ENCODE measurements at regions of chr10 and their contacts with region 1.

Region 1: GRCh38 chr10:97765201-97765600 is 6.6 kb downstream of the SFRP5 start:
- DNase-seq: no peak
- ATAC-seq: peak; percentile 48 to 92 (median 66)
- H3K4me3 ChIP-seq: no peak overlapping the region
- H3K27ac ChIP-seq: no peak overlapping the region
- H3K4me1 ChIP-seq: no peaks in the 10 kb centered on the region
- H3K27me3 ChIP-seq: peaks cover 0 to 25% (median 3%) of the 10 kb centered on the region in 3 donors
- CTCF ChIP-seq: no peak

Region 2: DNA sequence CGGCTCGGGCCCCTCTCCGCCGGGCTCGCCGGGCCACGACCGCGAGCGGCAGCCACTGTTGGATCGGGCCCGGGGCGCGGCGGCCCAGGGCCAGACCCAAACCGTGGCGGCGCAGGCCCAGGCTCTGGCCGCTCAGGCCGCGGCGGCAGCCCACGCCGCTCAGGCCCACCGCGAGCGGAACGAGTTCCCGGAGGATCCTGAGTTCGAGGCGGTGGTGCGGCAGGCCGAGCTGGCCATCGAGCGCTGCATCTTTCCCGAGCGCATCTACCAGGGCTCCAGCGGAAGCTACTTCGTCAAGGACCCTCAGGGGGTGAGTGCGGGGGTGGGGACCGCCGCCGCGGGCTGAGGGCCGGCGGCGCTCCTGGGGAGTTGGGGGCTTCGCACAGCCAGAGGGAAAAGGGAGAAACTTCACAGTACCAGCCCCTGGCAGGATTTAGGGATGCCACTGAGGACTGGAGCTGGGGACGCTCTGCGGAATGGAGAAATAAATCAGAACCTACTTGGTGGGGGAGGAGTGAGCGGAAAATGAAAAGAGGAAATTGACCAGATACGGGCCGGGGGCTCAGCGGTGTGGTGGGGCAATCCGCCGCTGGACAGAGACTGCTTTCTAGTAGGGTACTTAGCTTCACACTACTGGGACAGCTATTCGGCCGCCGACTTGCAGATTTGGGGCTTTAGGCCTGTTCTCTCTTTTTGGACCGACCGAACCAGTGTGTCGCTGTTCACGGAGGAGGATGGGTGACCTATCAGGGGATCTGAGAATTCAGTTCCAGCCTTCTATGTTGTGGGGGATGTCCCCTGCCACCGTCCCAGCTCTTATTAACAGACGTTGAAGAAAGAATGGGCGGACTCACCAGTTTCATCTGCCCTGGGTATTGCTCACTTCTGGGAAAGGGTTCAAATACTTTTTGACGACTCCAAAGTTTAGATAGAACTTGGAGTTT is 124.1 kb before region 1 on chr10:
- intact Hi-C with region 1: no loop called
- DNase-seq: peak in 1 of 2 donors; percentile 29
- ATAC-seq: peak in 2 of 4 donors; percentile 46 to 48
- H3K4me3 ChIP-seq: peak overlapping the region; percentile 90
- H3K27ac ChIP-seq: peak overlapping the region; percentile 84
- H3K4me1 ChIP-seq: peaks cover 14% of the 10 kb centered on the region
- H3K27me3 ChIP-seq: no peaks in the 10 kb centered on the region
- CTCF ChIP-seq: no peak

Region 3: DNA sequence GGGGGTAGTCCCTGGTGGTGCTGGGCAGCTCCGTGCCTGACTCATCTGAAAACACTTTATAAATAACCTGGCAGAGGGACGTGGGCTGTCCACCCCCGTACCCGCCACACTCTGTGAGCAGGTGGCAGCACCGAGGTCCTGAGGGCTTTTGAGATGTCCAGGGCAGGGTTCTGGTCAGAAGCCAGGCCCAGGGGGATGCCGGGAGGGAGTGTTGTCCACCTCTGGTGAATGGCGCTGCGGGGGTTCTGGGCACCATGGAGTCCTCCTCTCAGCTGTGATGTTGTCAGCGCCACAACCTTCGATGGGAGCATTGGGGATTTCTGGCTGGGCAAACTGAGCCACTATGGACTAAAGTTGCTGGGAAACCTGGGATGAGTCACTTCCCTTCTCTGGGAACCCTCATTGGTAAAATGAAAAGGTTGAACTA is 57.1 kb after region 1 on chr10:
- intact Hi-C with region 1: no loop called
- DNase-seq: peak; percentile 61 to 86
- ATAC-seq: peak; percentile 82 to 88 (median 84)
- H3K4me3 ChIP-seq: peak overlapping the region; percentile 56
- H3K27ac ChIP-seq: peak overlapping the region; percentile 95
- H3K4me1 ChIP-seq: peaks cover 44% of the 10 kb centered on the region
- H3K27me3 ChIP-seq: no peaks in the 10 kb centered on the region
- CTCF ChIP-seq: peak; percentile 5

Region 4: DNA sequence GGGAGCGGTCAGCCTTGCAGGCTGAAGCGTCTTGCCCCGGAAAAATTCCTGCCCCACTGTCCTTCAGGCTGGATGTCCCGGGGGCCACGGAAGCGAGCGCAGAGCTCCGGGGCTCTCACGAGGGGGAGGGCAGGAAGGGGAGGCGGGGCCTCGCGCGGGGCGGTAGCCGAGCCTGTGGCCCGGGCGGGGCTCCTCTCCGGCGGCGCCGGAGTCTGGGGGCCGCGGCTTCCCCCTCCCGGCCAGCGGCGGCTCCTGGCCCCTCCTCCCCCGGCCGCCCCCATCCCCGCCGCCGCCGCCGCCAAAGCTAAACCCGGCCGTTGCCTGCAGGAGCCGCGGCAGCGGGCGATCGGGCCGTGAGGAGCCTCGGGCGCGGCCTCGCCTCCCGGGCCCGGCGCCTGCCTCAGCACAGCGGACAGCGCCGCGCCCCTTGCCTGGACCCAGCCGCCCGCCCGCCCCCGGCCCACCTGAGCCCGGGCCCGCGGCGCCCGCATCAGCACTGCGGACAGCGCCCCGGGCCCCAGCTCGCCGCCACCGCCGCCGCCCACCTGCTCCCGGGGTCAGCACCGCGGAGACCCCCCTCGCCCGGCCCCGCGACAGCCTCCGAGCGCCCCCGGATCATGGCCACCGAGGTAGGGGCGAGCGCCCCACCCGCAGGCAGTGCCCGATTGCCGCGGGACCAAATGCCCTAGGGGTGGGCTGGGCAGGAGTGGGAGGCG is 84.6 kb after region 1 on chr10 and contains the start of gene GOLGA7B:
- intact Hi-C with region 1: loop called in 1 of 2 experiments (anchors 5 kb)
- DNase-seq: peak in 1 of 2 donors; percentile 28
- ATAC-seq: peak; percentile 77 to 83 (median 80)
- H3K4me3 ChIP-seq: peak within 1 kb of the TSS; percentile 69
- H3K27ac ChIP-seq: no peak within 1 kb of the TSS
- H3K4me1 ChIP-seq: peaks cover 8% of the 10 kb centered on the region
- H3K27me3 ChIP-seq: peaks cover 0 to 6% (median 0%) of the 10 kb centered on the region in 3 donors
- CTCF ChIP-seq: no peak
- total RNA-seq, gene GOLGA7B: 0.19 to 4.1 (median 0.99) TPM

Region 5: GRCh38 chr10:98150544-98150943 is 385.3 kb after region 1 on chr10:
- intact Hi-C with region 1: no loop called
- DNase-seq: no peak
- ATAC-seq: peak in 3 of 4 donors; percentile 56 to 83 (median 72)
- H3K4me3 ChIP-seq: no peak overlapping the region
- H3K27ac ChIP-seq: no peak overlapping the region
- H3K4me1 ChIP-seq: no peaks in the 10 kb centered on the region
- H3K27me3 ChIP-seq: no peaks in the 10 kb centered on the region
- CTCF ChIP-seq: no peak

Measured in psoas muscle (tissue), 8 donors.